ENCODE measurements at regions of chr20 and their contacts with region 1.

Region 1: GRCh38 chr20:32674362-32674789 is 635 bp upstream of the C20orf203 start:
- DNase-seq: peak in 1 of 2 experiments; percentile 83
- H3K4me3 ChIP-seq: no peak overlapping the region
- H3K27ac ChIP-seq: no peak overlapping the region
- H3K4me1 ChIP-seq: peaks cover 4 to 15% (median 14%) of the 10 kb centered on the region in 4 experiments
- H3K27me3 ChIP-seq: no peaks in the 10 kb centered on the region
- CTCF ChIP-seq: peak; percentile 66 to 85 (median 77)
- EP300 ChIP-seq: no peak
- POLR2A ChIP-seq: no peak
- RAD21 ChIP-seq: peak; percentile 91 to 93

Region 2: GRCh38 chr20:32560989-32561830 is 113.2 kb before region 1 on chr20:
- CTCF ChIA-PET with region 1: no interaction called
- POLR2A ChIA-PET with region 1: no interaction called
- DNase-seq: peak in 1 of 2 experiments; percentile 62
- H3K4me3 ChIP-seq: peak overlapping the region in 2 of 4 experiments; percentile 13 to 23; a peak in 3 of 8 replicates
- H3K27ac ChIP-seq: no peak overlapping the region
- H3K4me1 ChIP-seq: peaks cover 3 to 27% (median 14%) of the 10 kb centered on the region in 4 experiments
- H3K27me3 ChIP-seq: no peaks in the 10 kb centered on the region
- CTCF ChIP-seq: no peak
- EP300 ChIP-seq: no peak
- POLR2A ChIP-seq: no peak
- RAD21 ChIP-seq: no peak

Region 3: DNA sequence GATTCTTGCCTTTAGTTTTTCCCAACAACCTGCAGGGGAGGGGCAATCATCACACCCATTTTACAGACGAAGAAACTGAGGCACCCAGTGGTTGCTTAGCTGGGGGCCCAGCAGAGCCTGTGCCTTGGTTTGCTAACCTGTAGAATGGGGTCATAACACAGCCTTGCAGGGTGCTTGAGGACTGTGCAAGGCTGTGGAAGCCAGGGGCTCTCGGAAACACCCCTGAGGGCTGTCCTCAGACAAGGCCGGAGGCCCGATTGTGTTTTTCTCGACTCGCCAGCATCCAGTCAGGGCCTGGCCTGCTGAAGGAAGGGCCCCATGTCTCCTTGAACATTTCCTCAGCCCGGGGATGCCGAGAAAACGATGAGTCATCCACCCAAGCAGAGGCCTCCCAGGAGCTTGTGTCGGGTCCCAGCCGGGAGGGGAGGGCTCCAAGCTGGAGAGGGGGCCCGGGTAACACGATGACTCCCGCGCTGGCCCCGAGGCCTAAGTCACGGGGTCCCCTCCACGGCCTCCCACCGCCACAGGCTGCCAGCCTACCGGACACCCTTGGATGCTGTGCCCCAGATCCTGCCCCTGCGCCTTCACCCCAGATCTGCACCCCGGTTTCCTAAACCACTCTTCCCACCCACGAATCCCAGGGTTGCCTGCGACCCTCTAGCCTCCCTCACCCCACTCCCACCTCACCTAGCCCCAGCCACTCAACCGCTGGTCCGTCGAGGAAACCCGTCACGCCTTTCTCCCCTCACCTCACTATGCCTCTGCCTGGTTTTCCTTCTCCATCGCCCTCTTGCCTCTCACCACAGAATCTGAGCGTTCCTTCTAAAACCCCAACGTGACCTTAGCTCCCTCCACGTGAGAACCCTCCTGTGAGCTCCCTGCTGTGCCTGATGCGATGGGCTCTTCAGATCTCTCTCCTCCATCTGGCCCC is 99.8 kb before region 1 on chr20:
- CTCF ChIA-PET with region 1: no interaction called
- POLR2A ChIA-PET with region 1: no interaction called
- DNase-seq: no peak
- H3K4me3 ChIP-seq: no peak overlapping the region
- H3K27ac ChIP-seq: no peak overlapping the region; the same call in 1 of the 2 replicates
- H3K4me1 ChIP-seq: peaks cover 0 to 21% (median 9%) of the 10 kb centered on the region in 4 experiments; a peak in 5 of 7 replicates
- H3K27me3 ChIP-seq: peaks cover 0 to 2% (median 1%) of the 10 kb centered on the region in 4 experiments; a peak in 3 of 7 replicates
- CTCF ChIP-seq: no peak
- EP300 ChIP-seq: no peak
- POLR2A ChIP-seq: no peak
- RAD21 ChIP-seq: no peak

Region 4: GRCh38 chr20:32585011-32585518 is 89.3 kb before region 1 on chr20 and contains the start of gene NOL4L:
- CTCF ChIA-PET with region 1: no interaction called
- POLR2A ChIA-PET with region 1: no interaction called
- DNase-seq: peak in 1 of 2 experiments; percentile 69
- H3K4me3 ChIP-seq: peak within 1 kb of the TSS; percentile 52 to 69 (median 61)
- H3K27ac ChIP-seq: no peak within 1 kb of the TSS
- H3K4me1 ChIP-seq: peaks cover 0 to 21% (median 14%) of the 10 kb centered on the region in 4 experiments; a peak in 6 of 7 replicates
- H3K27me3 ChIP-seq: peaks cover 6 to 39% (median 34%) of the 10 kb centered on the region in 4 experiments
- CTCF ChIP-seq: no peak
- EP300 ChIP-seq: no peak
- POLR2A ChIP-seq: no peak
- RAD21 ChIP-seq: no peak
- total RNA-seq, gene NOL4L: 23.5 and 23.7 TPM in 2 replicates

Region 5: DNA sequence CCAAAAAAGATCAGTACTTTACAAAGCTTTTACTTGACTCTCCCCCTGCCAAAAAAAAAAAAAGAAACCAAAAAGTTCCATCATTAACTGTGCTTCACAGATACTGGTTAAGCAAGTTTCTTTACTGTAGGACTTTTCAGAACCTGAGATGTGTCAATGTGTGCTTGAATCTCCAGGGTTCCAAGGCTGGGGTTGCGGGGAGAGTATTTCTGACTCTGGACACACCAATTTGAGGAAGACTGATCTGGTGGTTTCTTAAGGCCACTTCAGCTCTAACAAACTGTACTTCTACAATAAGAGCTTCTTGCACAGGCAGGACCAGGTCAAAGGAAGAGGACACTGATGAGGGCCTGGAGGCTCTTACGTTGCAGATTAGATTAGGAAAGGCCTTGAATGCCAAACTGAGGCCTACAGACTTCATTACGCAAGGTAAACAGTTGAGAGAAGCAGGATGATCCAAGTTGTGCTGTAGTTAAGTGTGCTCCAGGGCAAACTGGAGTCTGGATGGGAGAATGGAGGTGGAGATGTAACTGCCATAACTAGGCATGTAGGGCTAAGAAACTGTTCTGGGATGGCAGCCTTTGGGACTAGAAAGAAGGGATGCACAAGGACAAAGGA is 44.5 kb after region 1 on chr20:
- CTCF ChIA-PET with region 1: no interaction called
- POLR2A ChIA-PET with region 1: no interaction called
- DNase-seq: no peak
- H3K4me3 ChIP-seq: no peak overlapping the region
- H3K27ac ChIP-seq: no peak overlapping the region
- H3K4me1 ChIP-seq: no peaks in the 10 kb centered on the region
- H3K27me3 ChIP-seq: no peaks in the 10 kb centered on the region
- CTCF ChIP-seq: no peak
- EP300 ChIP-seq: no peak
- POLR2A ChIP-seq: no peak
- RAD21 ChIP-seq: no peak

Region 6: DNA sequence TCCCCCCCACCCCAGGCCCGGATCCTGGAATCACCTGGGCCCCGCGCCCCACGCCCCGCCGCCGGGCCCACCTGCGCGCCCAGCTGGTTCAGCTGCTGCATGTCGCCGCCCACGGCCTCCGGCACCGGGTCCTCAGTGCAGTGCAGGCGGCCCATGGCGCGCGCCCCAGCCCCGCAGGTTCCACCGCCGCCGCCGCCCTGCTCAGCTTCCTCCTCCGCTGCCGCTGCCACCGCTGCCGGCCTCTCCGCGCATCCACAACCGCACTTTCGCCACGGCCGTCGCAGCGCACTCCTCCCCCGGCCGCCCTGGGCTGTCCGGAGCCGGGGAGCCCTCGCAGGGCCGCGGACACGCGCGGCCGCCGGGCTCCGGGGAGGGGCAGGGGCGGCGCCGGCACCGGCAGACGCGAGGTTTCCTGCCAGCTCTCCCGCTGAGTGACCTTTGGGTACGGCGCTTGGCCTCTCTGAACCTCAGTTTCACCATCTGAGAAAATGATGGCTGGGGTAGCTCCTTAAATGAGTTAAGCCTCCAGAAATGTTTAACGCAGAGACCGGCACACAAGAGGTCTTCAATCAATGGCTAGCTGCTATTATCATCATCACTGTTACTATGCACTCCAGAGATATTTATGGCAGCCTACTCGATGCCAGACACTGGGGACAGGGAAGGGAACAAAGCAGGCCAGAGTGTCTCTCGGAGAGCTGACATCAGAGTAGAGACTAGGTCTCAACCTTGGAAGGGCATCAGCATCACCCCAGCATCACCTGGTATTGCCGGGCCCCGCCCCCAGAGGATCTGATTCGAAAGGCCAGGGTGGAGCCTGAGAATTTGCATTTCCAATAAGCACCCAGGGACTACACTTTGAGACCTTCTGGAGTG is 69.1 kb after region 1 on chr20 and contains the start of gene COMMD7:
- CTCF ChIA-PET with region 1: interaction called, 23 read pairs
- POLR2A ChIA-PET with region 1: no interaction called
- DNase-seq: peak in 1 of 2 experiments; percentile 80
- H3K4me3 ChIP-seq: peak within 1 kb of the TSS; percentile 59 to 84 (median 72)
- H3K27ac ChIP-seq: no peak within 1 kb of the TSS
- H3K4me1 ChIP-seq: peaks cover 5 to 14% (median 9%) of the 10 kb centered on the region in 4 experiments; a peak in 6 of 7 replicates
- H3K27me3 ChIP-seq: no peaks in the 10 kb centered on the region
- CTCF ChIP-seq: no peak
- EP300 ChIP-seq: peak in 1 of 2 experiments; percentile 24; a peak in 1 of 3 replicates
- POLR2A ChIP-seq: peak in 1 of 2 experiments; percentile 49; a peak in 1 of 3 replicates
- RAD21 ChIP-seq: no peak
- total RNA-seq, gene COMMD7: 48.8 and 48.9 TPM in 2 replicates

Region 7: DNA sequence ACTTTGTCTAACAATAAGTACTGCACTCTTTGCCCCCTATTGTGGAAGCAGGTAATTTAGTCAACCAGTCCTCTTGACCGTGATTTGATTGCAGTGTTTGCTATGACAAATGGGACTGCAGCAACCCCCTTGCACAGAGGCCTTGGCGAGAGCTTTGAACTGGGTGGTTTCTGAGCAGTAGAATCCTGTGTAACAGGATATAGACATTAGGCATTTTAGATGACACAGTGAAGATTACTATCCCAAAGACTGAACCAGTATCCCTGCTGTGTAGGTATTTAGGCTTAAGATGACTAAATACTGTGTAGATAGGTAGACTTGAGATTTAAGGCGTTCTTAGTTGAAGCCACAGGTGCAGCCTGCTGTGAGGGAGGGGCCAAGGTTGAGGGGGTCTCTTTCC is 97.7 kb after region 1 on chr20:
- CTCF ChIA-PET with region 1: interaction called, 221 read pairs
- POLR2A ChIA-PET with region 1: interaction called, 14 read pairs
- DNase-seq: no peak
- H3K4me3 ChIP-seq: no peak overlapping the region; a peak in 1 of 8 replicates
- H3K27ac ChIP-seq: no peak overlapping the region
- H3K4me1 ChIP-seq: peaks cover 12 to 32% (median 22%) of the 10 kb centered on the region in 4 experiments; a peak in 6 of 7 replicates
- H3K27me3 ChIP-seq: no peaks in the 10 kb centered on the region
- CTCF ChIP-seq: no peak
- EP300 ChIP-seq: no peak
- POLR2A ChIP-seq: no peak
- RAD21 ChIP-seq: no peak

Region 8: GRCh38 chr20:32842688-32843524 is 168.5 kb after region 1 on chr20:
- CTCF ChIA-PET with region 1: interaction called, 15 read pairs
- POLR2A ChIA-PET with region 1: no interaction called
- DNase-seq: no peak
- H3K4me3 ChIP-seq: no peak overlapping the region
- H3K27ac ChIP-seq: no peak overlapping the region
- H3K4me1 ChIP-seq: peaks cover 0 to under 1% (median 0%) of the 10 kb centered on the region in 4 experiments; a peak in 1 of 7 replicates
- H3K27me3 ChIP-seq: no peaks in the 10 kb centered on the region
- CTCF ChIP-seq: no peak
- EP300 ChIP-seq: no peak
- POLR2A ChIP-seq: no peak
- RAD21 ChIP-seq: no peak